Natural killer cell (primary cell): ENCODE measurements at regions of chr10 and their contacts with region 1.

Region 1: DNA sequence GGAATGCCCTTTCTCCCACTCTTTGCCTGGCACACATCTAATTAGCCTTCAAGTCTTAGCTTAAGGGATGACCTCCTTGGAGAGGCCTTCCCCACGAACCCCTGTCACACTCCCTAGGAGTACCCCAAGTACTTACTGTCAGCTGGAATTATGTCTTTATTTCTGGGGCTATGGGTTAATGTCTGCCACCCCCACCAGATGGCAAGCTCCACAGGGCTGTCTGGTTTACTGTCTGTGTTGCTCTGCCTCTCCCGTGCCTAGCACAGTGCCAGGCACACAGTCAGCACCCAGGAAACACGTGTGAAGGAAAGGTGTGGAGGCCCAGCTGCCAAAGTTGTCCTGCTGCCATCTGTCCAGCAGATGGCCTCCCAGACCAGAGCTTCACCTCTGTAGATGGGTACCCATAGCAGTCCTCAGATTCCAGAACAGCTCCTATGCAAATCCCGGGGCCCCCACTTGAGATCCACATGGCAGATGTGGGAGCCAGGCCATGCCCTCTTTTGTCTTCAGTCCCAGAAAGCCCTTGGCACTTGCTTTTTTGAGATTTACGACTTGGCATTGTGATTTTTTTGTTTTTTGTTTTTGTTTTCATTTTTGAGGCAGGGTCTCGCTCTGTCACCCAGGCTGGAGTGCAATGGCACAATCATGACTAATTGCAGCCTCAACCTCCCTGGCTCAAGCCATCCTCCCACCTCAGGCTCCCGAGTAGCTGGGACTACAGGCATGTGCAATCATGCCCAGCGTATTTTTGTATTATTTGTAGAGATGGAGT is 17.2 kb upstream of the PALD1 start:
- DNase-seq: peak in 1 of 2 donors; percentile 74
- ATAC-seq: peak in 2 of 3 donors; percentile 65 to 77
- H3K4me3 ChIP-seq: no peak overlapping the region
- H3K4me3 Mint-ChIP-seq: no peak overlapping the region
- H3K27ac ChIP-seq: no peak overlapping the region
- H3K27ac Mint-ChIP-seq: no peak overlapping the region
- H3K4me1 ChIP-seq: peaks cover 9% of the 10 kb centered on the region
- H3K4me1 Mint-ChIP-seq: no peaks in the 10 kb centered on the region
- H3K27me3 ChIP-seq: peaks cover 9% of the 10 kb centered on the region
- H3K27me3 Mint-ChIP-seq: peaks cover 21 to 25% of the 10 kb centered on the region in 2 donors
- CTCF ChIP-seq: peak; percentile 64

Region 2: DNA sequence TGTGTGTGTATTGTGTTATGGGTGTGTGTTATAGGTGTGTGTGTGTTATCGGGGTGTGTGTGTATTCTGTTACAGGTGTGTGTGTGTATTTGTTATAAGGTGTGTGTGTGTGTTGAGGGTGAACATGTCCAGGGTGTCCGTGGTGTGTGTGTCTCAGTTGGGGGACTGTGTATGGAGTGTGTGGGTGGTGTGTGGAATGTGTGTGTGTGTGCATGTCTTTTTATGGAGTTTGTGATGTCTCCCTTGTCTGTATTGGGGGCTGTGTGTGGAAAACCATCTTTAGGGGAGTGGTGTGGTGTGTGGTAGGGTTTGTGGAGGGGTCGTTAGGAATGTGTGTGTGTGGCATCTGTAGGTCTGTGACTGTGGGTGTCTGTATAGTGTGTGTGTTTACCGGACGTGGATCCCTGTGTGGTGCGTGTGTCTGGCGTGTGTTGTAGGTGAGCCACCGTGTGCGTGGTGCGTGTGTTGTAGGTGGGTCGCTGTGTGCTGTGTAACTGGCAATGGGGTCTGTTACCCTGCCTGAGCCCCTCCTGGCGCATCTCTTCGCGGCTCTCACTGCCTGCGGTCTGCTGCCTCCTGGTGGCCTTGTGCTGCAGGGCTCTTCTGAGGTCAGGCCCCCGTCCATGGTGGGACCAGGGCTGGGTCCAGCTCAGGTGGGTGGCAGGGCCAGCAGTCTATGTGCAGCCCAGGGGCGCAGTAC is 78.8 kb after region 1 on chr10:
- intact Hi-C with region 1: loop called (anchors 1 kb)
- DNase-seq: peak in 1 of 2 donors; percentile 48
- ATAC-seq: peak in 2 of 3 donors; percentile 15 to 53
- H3K4me3 ChIP-seq: no peak overlapping the region
- H3K4me3 Mint-ChIP-seq: no peak overlapping the region
- H3K27ac ChIP-seq: no peak overlapping the region
- H3K27ac Mint-ChIP-seq: no peak overlapping the region
- H3K4me1 ChIP-seq: peaks cover 9% of the 10 kb centered on the region
- H3K4me1 Mint-ChIP-seq: no peaks in the 10 kb centered on the region
- H3K27me3 ChIP-seq: no peaks in the 10 kb centered on the region
- H3K27me3 Mint-ChIP-seq: peaks cover 0 to 4% of the 10 kb centered on the region in 2 donors
- CTCF ChIP-seq: peak; percentile 18

Region 3: DNA sequence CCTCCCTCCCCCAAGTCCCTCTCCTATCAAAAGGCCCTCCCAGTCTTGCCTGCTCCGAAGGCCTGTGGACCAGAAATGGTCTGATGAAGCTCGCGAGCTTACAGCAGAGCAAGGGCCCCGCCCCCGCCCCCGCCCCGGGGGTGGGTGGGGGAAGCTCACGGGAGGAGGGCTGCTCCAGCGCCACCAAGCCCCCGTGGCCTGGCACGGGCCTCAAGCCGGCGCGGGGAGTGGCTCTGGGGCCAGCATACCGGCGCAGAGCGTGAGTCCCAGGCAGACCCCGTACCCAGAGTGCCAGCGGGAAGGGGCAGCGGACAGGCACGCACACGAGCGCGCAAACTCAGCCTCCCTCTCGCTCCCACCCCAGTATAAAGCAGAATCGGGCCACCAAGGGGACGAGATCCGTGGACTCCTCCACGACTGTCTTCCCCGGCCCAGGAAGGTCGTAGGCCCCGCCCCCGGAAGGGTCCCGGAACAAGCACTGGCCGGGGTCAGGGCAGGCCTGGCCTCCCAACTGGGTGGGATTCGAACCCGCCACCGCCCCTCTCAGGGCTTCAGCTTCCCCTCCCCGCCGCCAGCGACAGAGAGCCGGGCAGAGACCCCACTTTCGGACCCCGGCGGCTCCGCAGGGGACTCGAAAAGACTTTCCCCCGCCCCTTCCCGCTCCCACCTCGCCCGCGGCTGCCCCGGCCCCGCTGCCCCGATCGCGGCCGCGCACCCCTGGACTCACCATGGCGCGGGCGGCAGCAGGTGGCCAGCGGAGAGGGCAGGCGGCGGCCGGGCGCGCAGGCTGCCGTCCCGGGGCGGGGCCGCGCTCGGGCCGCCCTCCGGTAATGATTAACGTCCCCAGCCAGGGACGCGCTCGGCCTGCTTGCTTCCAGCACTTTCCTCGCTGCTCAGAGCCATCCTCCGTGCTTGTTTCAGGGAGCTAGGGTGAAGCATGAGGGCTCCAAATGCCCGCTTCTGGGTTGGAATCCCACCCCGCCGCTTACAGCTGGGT is 426.7 kb after region 1 on chr10 and contains the start of gene PCBD1:
- intact Hi-C with region 1: loop called (anchors 5 kb)
- DNase-seq: peak; percentile 62 to 76
- ATAC-seq: peak; percentile 84 to 92 (median 89)
- H3K4me3 ChIP-seq: peak within 1 kb of the TSS; percentile 66
- H3K4me3 Mint-ChIP-seq: peak within 1 kb of the TSS; percentile 91
- H3K27ac ChIP-seq: peak within 1 kb of the TSS; percentile 67
- H3K27ac Mint-ChIP-seq: peak within 1 kb of the TSS; percentile 73 to 77
- H3K4me1 ChIP-seq: peaks cover 11% of the 10 kb centered on the region
- H3K4me1 Mint-ChIP-seq: peaks cover 0 to 19% of the 10 kb centered on the region in 2 donors
- H3K27me3 ChIP-seq: no peaks in the 10 kb centered on the region
- H3K27me3 Mint-ChIP-seq: no peaks in the 10 kb centered on the region
- CTCF ChIP-seq: no peak
- total RNA-seq, gene PCBD1: 7.2 to 15.3 (median 10.4) TPM